K562 (cell line): ENCODE measurements at regions of chr10 and their contacts with region 1.

Region 1: GRCh38 chr10:17474595-17475323 is 20.4 kb upstream of the ST8SIA6 start:
- DNase-seq: peak; percentile 30 to 76 (median 50)
- ATAC-seq: peak; percentile 69
- H3K4me3 ChIP-seq: peak overlapping the region; percentile 26
- H3K27ac ChIP-seq: no peak overlapping the region; the same call in 1 of the 3 replicates
- H3K4me1 ChIP-seq: peaks cover 3 to 12% of the 10 kb centered on the region in 2 experiments; a peak in 2 of 5 replicates
- H3K27me3 ChIP-seq: no peaks in the 10 kb centered on the region
- CTCF ChIP-seq: peak; percentile 41 to 69 (median 46); a peak in 4 of 6 replicates
- EP300 ChIP-seq: no peak
- POLR2A ChIP-seq: no peak
- RAD21 ChIP-seq: peak; percentile 36 to 56; a peak in 3 of 4 replicates

Region 2: GRCh38 chr10:16843252-16843870 is 631.4 kb before region 1 on chr10:
- CTCF ChIA-PET with region 1: no interaction called
- POLR2A ChIA-PET with region 1: no interaction called
- in situ Hi-C with region 1: loop called (anchors 25 kb)
- intact Hi-C with region 1: loop called (anchors 5 kb)
- DNase-seq: peak in 3 of 4 experiments; percentile 10 to 67 (median 21)
- ATAC-seq: peak; percentile 80
- H3K4me3 ChIP-seq: no peak overlapping the region
- H3K27ac ChIP-seq: no peak overlapping the region
- H3K4me1 ChIP-seq: no peaks in the 10 kb centered on the region
- H3K27me3 ChIP-seq: no peaks in the 10 kb centered on the region
- CTCF ChIP-seq: peak; percentile 35 to 77 (median 45); a peak in 3 of 6 replicates
- EP300 ChIP-seq: no peak
- POLR2A ChIP-seq: no peak
- RAD21 ChIP-seq: peak; percentile 65 to 71

Region 3: GRCh38 chr10:17409170-17409733 is 65.5 kb before region 1 on chr10:
- CTCF ChIA-PET with region 1: interaction called, 3 read pairs
- POLR2A ChIA-PET with region 1: no interaction called
- in situ Hi-C with region 1: no loop called
- intact Hi-C with region 1: loop called (anchors 1 kb)
- DNase-seq: peak in 2 of 4 experiments; percentile 34 to 62
- ATAC-seq: peak; percentile 67
- H3K4me3 ChIP-seq: no peak overlapping the region
- H3K27ac ChIP-seq: no peak overlapping the region
- H3K4me1 ChIP-seq: peaks cover 14 to 29% of the 10 kb centered on the region in 2 experiments; a peak in 4 of 5 replicates
- H3K27me3 ChIP-seq: no peaks in the 10 kb centered on the region
- CTCF ChIP-seq: peak; percentile 47 to 67 (median 50); a peak in 5 of 6 replicates
- EP300 ChIP-seq: no peak
- POLR2A ChIP-seq: no peak
- RAD21 ChIP-seq: peak; percentile 63 to 79

Region 4: DNA sequence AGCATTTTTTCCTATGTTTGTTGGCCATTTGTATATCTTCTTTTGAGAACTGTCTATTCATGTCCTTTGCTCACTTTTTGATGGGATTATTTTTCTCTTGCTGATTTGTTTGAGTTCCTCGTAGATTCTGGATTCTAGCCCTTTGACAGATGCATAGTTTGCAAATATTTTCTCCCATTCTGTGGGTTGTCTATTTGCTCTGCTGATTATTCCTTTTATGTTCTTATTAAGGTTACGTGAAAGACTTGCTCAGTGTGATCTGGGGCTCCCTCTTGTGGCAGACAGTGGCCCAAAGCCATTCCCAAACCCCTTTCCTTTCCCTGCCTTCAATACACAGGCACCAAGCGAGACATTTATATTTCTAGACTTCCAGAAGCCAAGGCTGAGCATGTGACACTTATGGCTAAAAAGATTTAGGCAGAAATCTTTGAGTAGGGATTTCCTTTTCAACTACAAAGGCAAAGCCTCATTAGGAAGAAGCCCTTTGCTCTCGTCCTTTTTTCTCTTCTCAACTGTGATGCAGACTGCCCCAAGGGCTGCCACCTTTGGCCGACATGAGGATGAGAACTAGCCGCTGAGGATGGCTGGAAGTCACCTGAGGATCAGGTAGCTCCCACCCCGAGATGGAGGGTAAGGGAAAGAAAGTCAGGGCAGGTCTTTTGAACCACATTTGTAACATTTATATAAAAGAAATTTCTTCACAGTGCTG is 44.0 kb before region 1 on chr10:
- CTCF ChIA-PET with region 1: no interaction called
- POLR2A ChIA-PET with region 1: interaction called, 4 read pairs
- in situ Hi-C with region 1: no loop called
- intact Hi-C with region 1: loop called (anchors 1 kb)
- DNase-seq: peak; percentile 51 to 89 (median 58)
- ATAC-seq: peak; percentile 48
- H3K4me3 ChIP-seq: no peak overlapping the region
- H3K27ac ChIP-seq: peak overlapping the region; percentile 27
- H3K4me1 ChIP-seq: peaks cover 43 to 77% of the 10 kb centered on the region in 2 experiments
- H3K27me3 ChIP-seq: no peaks in the 10 kb centered on the region
- CTCF ChIP-seq: peak; percentile 79 to 92 (median 88)
- EP300 ChIP-seq: no peak
- POLR2A ChIP-seq: no peak
- RAD21 ChIP-seq: peak; percentile 87 to 91

Region 5: DNA sequence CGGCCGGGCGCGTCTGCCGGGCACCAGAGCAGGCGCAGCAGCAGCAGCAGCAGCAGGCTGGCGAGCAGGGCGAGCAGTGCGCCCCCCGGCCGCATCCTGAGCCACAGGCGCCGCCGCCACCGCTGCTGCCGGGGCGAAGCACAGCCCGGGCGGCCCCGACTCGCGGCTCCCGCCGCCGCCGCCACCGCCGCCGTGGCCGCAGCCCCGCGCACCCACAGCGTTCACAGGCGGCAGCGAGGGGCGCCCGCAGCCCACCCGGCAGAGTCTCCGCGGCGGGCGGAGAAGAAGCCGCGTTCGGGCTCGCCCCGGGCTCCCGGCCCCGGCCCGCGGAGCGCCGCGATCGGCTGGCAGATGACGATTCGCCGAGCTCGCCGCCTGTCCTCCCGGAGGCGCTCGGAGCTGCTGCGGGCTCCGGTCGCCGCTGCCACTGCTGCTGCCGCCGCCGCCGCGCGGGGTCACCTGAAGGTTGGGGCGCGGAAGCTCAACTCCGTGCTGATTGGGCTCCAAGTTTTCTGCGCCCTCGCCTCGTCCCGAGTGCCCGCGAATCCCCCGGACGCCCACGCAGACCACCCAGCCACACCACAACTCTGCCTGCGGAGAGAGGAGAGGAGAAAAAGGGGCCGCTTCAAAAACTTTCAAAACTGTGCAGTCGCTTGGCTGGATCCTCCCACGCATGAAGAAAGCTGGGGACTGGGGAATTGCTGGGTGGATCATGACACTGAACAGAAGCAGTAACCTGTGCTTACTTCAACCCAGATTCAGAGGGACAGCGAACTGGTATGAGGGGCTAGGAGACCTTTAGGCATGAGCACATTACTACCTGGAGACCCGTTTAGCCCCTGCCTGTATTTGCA is 20.4 kb before region 1 on chr10 and contains the start of gene ST8SIA6:
- CTCF ChIA-PET with region 1: interaction called, 3 read pairs
- POLR2A ChIA-PET with region 1: interaction called, 5 read pairs
- in situ Hi-C with region 1: no loop called
- intact Hi-C with region 1: loop called (anchors 1 kb)
- DNase-seq: peak; percentile 69 to 77 (median 70)
- ATAC-seq: peak; percentile 49
- H3K4me3 ChIP-seq: peak within 1 kb of the TSS; percentile 77
- H3K27ac ChIP-seq: peak within 1 kb of the TSS; percentile 91
- H3K4me1 ChIP-seq: peaks cover 22 to 41% of the 10 kb centered on the region in 2 experiments
- H3K27me3 ChIP-seq: no peaks in the 10 kb centered on the region
- CTCF ChIP-seq: peak in 2 of 3 experiments; percentile 17 to 37; a peak in 3 of 6 replicates
- EP300 ChIP-seq: 0 out of 2 replicates have a peak, but pooled peaks have one; percentile 1
- POLR2A ChIP-seq: no peak
- RAD21 ChIP-seq: 0 out of 4 replicates have a peak, but pooled peaks of 1 of the 2 experiments have one; percentile 6
- polyA plus RNA-seq, gene ST8SIA6: 0.69 to 1.2 TPM

Region 6: DNA sequence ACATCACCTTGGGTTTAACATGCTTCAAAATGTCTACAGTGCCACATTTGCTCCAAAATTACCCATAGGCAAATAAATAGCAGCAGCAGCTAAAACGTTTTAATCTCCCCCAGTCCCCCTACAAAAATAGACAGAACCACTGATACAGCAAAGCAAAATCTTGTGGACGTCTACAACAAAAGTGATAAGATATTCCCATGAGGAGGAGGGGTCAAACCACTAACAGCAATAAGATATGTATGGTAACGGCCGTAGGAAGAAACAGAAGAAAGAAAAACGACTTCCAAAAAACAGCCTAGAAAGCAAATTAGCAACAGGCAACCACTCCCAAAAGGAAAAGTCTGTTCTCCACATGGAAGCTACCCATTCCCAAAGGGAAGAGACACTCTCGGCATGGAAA is 14.1 kb after region 1 on chr10:
- CTCF ChIA-PET with region 1: no interaction called
- POLR2A ChIA-PET with region 1: no interaction called
- in situ Hi-C with region 1: no loop called
- intact Hi-C with region 1: no loop called
- DNase-seq: peak in 2 of 4 experiments; percentile 39 to 43
- ATAC-seq: peak; percentile 64; the same call in 2 of the 3 replicates
- H3K4me3 ChIP-seq: no peak overlapping the region
- H3K27ac ChIP-seq: peak overlapping the region; percentile 2; the same call in 1 of the 3 replicates
- H3K4me1 ChIP-seq: peaks cover 0 to 6% of the 10 kb centered on the region in 2 experiments; a peak in 3 of 5 replicates
- H3K27me3 ChIP-seq: no peaks in the 10 kb centered on the region
- CTCF ChIP-seq: no peak
- EP300 ChIP-seq: no peak
- POLR2A ChIP-seq: no peak
- RAD21 ChIP-seq: no peak

Region 7: DNA sequence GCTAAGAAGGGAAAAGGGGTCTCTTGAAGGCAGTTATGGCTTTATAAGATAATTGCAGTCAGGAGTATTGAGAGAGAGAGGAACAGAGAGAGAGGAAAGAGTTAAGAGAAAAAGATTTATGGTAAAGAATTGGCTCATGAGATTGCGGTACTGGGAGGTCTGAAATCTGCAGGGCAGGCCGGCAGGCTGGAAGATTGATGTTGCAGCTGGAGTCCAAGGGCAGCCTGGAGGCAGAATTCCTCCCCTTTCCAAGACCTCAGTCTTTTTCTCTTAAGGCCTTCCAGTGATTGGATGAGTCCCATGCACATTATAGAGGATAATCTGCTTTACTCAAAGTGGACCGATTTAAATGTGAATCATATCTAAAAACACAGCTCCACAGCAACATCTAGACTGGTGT is 74.0 kb after region 1 on chr10:
- CTCF ChIA-PET with region 1: no interaction called
- POLR2A ChIA-PET with region 1: no interaction called
- in situ Hi-C with region 1: no loop called
- intact Hi-C with region 1: no loop called
- DNase-seq: no peak
- ATAC-seq: no peak
- H3K4me3 ChIP-seq: no peak overlapping the region
- H3K27ac ChIP-seq: no peak overlapping the region
- H3K4me1 ChIP-seq: no peaks in the 10 kb centered on the region
- H3K27me3 ChIP-seq: no peaks in the 10 kb centered on the region
- CTCF ChIP-seq: no peak
- EP300 ChIP-seq: no peak
- POLR2A ChIP-seq: no peak
- RAD21 ChIP-seq: no peak

Region 8: GRCh38 chr10:17599089-17599488 is 124.3 kb after region 1 on chr10:
- CTCF ChIA-PET with region 1: no interaction called
- POLR2A ChIA-PET with region 1: no interaction called
- in situ Hi-C with region 1: no loop called
- intact Hi-C with region 1: loop called (anchors 10 kb)
- DNase-seq: peak; percentile 19 to 69 (median 39)
- ATAC-seq: peak; percentile 97
- H3K4me3 ChIP-seq: no peak overlapping the region
- H3K27ac ChIP-seq: no peak overlapping the region
- H3K4me1 ChIP-seq: peaks cover 2 to 6% of the 10 kb centered on the region in 2 experiments; a peak in 2 of 5 replicates
- H3K27me3 ChIP-seq: no peaks in the 10 kb centered on the region
- CTCF ChIP-seq: peak; percentile 49 to 63 (median 61)
- EP300 ChIP-seq: no peak
- POLR2A ChIP-seq: no peak
- RAD21 ChIP-seq: peak; percentile 77 to 88